ENCODE measurements at regions of chr19 and their contacts with region 1.

Region 1: DNA sequence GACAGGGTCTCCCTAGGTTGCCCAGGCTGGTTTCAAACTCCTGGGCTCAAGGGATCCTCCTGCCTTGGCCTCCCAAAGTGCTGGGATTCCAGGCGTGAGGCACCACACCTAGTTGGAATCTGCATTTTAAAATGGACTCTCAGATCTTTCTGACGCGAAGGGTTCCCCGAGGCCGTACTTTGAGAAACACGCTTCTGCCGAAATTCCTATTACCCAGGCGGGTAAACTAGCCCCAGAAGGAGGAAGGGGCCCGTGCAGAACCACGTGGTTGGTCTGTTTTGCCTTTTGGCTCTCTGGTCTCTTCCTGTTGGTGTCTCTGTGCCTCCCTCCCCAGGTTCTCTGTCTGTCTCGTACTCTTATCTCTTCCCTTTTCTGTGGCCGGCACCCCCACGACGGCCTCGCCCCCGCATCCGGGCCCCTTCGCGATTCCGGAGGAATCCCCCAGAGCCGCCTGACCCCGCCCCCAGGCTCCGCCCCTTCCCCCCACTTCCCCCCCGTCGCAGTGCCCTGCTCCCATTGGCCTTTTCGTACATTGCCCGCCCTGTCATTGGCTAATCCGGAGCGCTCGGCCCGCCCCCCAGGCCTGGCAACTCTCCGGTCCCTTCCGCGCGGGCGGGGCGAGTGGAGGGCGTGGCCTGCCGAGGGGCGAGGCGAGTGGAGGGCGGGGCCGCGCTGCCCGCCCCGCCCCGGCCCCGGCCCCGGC is at the start of gene TNFAIP8L1:
- DNase-seq: peak; percentile 97 to 98
- H3K4me3 ChIP-seq: peak within 1 kb of the TSS; percentile 72 to 81 (median 76)
- H3K27ac ChIP-seq: peak within 1 kb of the TSS; percentile 57 to 92 (median 77)
- H3K4me1 ChIP-seq: peaks cover 28 to 67% (median 46%) of the 10 kb centered on the region in 4 donors
- H3K27me3 ChIP-seq: peaks cover 0 to 19% (median 4%) of the 10 kb centered on the region in 3 donors
- CTCF ChIP-seq: no peak
- EP300 ChIP-seq: no peak
- POLR2A ChIP-seq: no peak
- total RNA-seq, gene TNFAIP8L1: 7.0 to 43.4 (median 9.5) TPM

Region 2: DNA sequence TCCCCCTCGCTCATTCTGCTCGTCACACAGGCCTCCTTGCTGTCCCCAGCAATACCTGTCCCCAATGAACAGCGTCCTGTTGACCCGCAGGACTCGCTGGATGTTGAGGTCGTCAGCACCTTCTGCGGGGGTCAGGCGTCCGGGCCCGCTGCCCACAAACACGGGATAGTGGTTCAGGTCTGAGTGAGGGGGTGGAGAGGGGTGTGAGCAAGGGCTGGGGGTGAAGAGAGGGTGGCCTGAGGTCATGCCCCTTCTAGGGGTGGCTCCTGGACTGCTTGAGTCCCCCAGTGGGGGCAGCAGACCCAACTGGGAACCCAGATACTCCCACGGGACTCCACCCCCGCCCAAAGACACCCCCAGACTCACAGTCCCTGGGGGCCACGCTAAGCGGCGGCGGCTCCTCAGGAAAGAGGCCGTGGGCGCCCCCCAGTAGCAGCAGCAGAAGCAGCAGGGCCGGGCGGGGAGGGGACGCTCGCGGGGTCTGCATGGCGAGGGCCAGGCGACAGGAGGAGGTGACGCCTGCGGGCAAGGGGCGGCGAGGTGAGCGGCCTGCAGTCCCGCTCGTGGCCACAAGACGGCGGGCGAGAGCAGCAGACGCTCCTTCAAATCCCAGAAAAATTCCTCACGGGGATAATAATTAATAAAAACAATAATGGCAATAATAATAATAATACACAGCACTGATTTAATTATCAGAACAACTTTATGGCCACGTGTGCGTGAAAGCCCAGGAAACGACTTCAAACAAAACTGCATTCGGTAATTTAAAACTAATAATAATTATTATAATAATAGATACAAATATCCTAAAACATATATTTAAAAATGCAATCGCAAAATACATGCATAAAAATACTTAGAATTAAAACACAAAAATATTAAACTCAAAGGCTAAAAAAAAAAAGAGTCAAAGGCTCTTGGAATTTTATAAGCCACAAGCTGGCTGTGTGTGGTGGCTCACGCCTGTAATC is 80.7 kb before region 1 on chr19:
- intact Hi-C with region 1: loop called (anchors 5 kb)
- DNase-seq: peak; percentile 59 to 69
- H3K4me3 ChIP-seq: peak overlapping the region; percentile 22 to 44 (median 32)
- H3K27ac ChIP-seq: peak overlapping the region in 3 of 5 donors; percentile 49 to 71 (median 53)
- H3K4me1 ChIP-seq: peaks cover 0 to 27% (median 5%) of the 10 kb centered on the region in 4 donors
- H3K27me3 ChIP-seq: peaks cover 0 to 10% (median 6%) of the 10 kb centered on the region in 3 donors
- CTCF ChIP-seq: peak in 5 of 7 experiments; percentile 82 to 100 (median 100)
- EP300 ChIP-seq: no peak
- POLR2A ChIP-seq: no peak

Region 3: DNA sequence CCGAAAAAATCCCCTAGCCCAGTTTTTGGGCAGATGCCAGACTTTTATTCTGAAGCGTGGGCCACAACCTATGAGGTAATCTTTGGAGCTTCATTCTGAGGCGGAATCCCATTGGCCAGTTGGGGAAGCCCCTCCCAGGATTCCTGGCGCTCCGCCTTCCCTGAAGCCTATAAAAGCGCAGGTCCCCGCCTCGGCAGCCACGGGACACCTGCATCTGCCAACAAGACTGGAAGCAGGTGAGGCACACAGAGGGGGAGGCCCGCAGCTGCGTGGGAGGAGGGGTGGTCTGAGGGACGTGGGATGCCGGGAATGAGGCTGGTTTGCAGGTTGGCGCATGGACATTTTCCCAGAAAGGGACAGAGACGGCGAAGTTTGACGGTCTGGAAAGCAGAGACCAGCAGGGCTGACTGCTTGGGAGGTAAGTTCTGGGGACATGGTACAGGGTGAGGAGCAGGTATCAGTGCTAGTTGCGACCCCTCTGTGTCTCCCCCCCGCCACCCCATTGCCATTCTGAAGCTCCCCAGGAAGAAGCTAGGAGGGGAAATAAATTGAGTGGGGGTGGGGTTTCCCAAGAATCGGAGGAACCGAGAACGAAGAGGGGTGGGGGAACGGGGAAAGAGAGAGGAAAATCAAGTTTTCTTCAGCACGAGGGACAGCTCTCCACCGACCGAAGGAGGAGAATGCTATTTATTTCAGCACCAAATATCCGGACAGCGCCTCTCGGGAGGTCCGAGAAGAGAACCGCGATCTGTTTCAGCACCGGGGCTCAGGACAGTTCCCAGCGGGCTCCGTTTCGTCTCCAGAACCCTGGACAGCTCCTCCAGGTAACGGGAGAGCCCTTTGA is 130.2 kb after region 1 on chr19:
- intact Hi-C with region 1: no loop called
- DNase-seq: peak; percentile 82 to 96
- H3K4me3 ChIP-seq: peak overlapping the region in 1 of 4 donors; percentile 12
- H3K27ac ChIP-seq: no peak overlapping the region
- H3K4me1 ChIP-seq: no peaks in the 10 kb centered on the region
- H3K27me3 ChIP-seq: peaks cover 0 to 26% (median 0%) of the 10 kb centered on the region in 3 donors
- CTCF ChIP-seq: no peak
- EP300 ChIP-seq: no peak
- POLR2A ChIP-seq: peak in 1 of 4 donors; percentile 31